ENCODE measurements at regions of chr19 and their contacts with region 1.

Region 1: GRCh38 chr19:41376241-41376997 is at the start of gene TMEM91:
- DNase-seq: peak; percentile 84
- H3K4me3 ChIP-seq: peak within 1 kb of the TSS; percentile 36 to 80 (median 53)
- H3K27ac ChIP-seq: peak within 1 kb of the TSS; percentile 13 to 94 (median 74)
- H3K4me1 ChIP-seq: peaks cover 0 to 72% (median 36%) of the 10 kb centered on the region in 6 donors
- H3K27me3 ChIP-seq: no peaks in the 10 kb centered on the region
- CTCF ChIP-seq: no peak
- POLR2A ChIP-seq: no peak
- total RNA-seq, gene TMEM91: 19.3 to 62.0 (median 23.5) TPM

Region 2: GRCh38 chr19:41415154-41415571 is 38.7 kb after region 1 on chr19:
- intact Hi-C with region 1: loop called (anchors 5 kb)
- DNase-seq: no peak
- H3K4me3 ChIP-seq: no peak overlapping the region
- H3K27ac ChIP-seq: peak overlapping the region in 1 of 8 donors; percentile 58
- H3K4me1 ChIP-seq: peaks cover 0 to 83% (median 27%) of the 10 kb centered on the region in 6 donors
- H3K27me3 ChIP-seq: no peaks in the 10 kb centered on the region
- CTCF ChIP-seq: no peak
- POLR2A ChIP-seq: no peak

Region 3: GRCh38 chr19:41501854-41502253 is 125.4 kb after region 1 on chr19:
- intact Hi-C with region 1: no loop called
- DNase-seq: no peak
- H3K4me3 ChIP-seq: no peak overlapping the region
- H3K27ac ChIP-seq: peak overlapping the region in 7 of 8 donors; percentile 48 to 90 (median 79)
- H3K4me1 ChIP-seq: peaks cover 0 to 13% (median 5%) of the 10 kb centered on the region in 6 donors
- H3K27me3 ChIP-seq: peaks cover 0 to 45% (median 0%) of the 10 kb centered on the region in 7 donors
- CTCF ChIP-seq: no peak
- POLR2A ChIP-seq: no peak